ENCODE measurements at regions of chr3 and their contacts with region 1.

Region 1: GRCh38 chr3:108835101-108835500 is 12.5 kb downstream of the TRAT1 start:
- DNase-seq: peak; percentile 75
- ATAC-seq: peak; percentile 72
- H3K4me3 Mint-ChIP-seq: peak overlapping the region; percentile 68
- H3K27ac Mint-ChIP-seq: peak overlapping the region; percentile 79
- H3K4me1 Mint-ChIP-seq: peaks cover 86% of the 10 kb centered on the region
- H3K27me3 Mint-ChIP-seq: no peaks in the 10 kb centered on the region
- CTCF ChIP-seq: no peak

Region 2: GRCh38 chr3:108897883-108898282 is 62.8 kb after region 1 on chr3:
- CTCF ChIA-PET with region 1: interaction called, 3 read pairs
- POLR2A ChIA-PET with region 1: no interaction called
- intact Hi-C with region 1: loop called (anchors 5 kb)
- DNase-seq: no peak
- ATAC-seq: peak; percentile 52
- H3K4me3 Mint-ChIP-seq: no peak overlapping the region
- H3K27ac Mint-ChIP-seq: peak overlapping the region; percentile 63
- H3K4me1 Mint-ChIP-seq: peaks cover 38% of the 10 kb centered on the region
- H3K27me3 Mint-ChIP-seq: no peaks in the 10 kb centered on the region
- CTCF ChIP-seq: no peak

Measured in activated CD8-positive, alpha-beta T cell treated with anti-CD3 and anti-CD28 coated beads for 36 hours (primary cell).